ENCODE measurements at regions of chr16 and their contacts with region 1.

Region 1: DNA sequence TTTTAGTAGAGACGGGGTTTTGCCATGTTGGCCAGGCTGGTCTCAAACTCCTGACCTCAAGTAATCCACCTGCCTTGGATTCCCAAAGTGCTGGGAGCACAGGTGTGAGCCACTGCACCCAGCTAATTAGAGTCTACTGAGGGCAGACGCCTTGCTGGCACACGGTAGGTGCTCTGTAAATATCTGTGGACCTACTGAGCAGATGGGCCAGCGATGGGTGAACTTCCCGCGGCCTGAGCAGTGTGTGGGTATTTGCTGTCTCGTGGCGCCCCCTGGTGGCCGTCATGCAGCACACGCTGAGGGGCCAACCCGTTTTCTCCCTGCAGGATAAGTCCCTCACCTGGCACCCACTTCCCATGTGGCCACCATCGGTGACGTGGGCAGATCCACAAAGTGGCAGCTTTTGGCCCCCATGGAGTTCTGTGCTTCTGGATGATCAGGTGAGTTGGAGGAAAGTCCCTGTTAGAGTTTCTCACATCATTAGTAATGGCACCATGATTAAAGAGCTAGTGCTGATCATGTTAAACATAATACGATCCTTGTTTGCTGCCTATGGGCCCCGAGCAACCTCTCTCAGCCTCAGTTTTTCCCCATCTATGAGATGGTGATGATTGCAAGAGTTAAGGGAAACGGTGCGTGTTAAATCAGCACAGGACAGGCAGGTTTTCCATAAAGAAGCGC is 40.7 kb downstream of the ZDHHC7 start:
- DNase-seq: no peak
- H3K4me3 ChIP-seq: no peak overlapping the region
- H3K27me3 ChIP-seq: no peaks in the 10 kb centered on the region
- CTCF ChIP-seq: peak; percentile 87

Region 2: GRCh38 chr16:84754353-84754856 is 216.2 kb before region 1 on chr16:
- CTCF ChIA-PET with region 1: interaction called, 112 read pairs
- POLR2A ChIA-PET with region 1: interaction called, 7 read pairs
- DNase-seq: peak; percentile 41
- H3K4me3 ChIP-seq: no peak overlapping the region
- H3K27me3 ChIP-seq: no peaks in the 10 kb centered on the region
- CTCF ChIP-seq: peak; percentile 72

Region 3: DNA sequence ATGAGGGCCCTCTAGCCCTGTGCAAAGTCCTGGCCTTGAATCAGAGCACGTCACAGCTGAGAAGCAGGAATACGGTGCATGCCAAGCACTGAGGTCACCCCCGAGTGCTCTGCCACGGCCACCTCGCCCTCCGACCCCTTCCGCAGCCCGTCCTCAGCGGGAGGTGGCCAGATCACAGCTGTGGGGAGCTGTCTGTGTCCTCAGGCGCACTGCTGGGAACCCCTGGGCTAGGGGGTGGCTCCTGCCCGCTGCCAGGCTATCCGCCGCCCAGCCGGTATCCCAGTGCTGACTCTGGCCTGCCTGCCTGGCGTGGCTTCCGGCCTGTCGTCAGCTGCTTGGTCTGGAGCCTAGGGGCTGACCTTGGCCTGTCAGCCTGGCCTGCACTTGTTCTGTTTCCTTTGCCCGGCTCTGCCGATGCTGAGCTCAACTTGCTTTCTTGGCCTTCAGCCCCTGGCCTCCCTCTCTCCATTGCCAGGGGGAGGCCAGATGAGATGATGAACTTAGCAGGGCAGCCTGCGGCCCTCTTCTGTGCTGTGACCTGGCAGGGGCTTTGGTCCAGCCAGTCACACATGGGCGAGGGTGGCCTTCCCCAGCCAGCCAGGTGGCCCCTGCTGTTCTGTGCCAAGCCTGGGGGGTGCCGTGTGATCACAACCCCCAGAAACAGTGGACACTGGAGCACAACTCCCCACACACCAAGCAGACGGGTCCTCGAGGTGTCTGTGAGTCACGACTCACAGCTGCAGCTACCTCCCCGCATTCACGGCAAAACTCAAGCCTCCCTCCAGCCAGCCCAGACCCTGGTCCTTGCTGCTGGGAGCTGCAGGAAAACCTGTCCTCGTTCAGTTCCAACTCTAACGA is 36.6 kb before region 1 on chr16:
- CTCF ChIA-PET with region 1: interaction called, 82 read pairs
- POLR2A ChIA-PET with region 1: no interaction called
- DNase-seq: no peak
- H3K4me3 ChIP-seq: no peak overlapping the region
- H3K27me3 ChIP-seq: no peaks in the 10 kb centered on the region
- CTCF ChIP-seq: no peak

Region 4: DNA sequence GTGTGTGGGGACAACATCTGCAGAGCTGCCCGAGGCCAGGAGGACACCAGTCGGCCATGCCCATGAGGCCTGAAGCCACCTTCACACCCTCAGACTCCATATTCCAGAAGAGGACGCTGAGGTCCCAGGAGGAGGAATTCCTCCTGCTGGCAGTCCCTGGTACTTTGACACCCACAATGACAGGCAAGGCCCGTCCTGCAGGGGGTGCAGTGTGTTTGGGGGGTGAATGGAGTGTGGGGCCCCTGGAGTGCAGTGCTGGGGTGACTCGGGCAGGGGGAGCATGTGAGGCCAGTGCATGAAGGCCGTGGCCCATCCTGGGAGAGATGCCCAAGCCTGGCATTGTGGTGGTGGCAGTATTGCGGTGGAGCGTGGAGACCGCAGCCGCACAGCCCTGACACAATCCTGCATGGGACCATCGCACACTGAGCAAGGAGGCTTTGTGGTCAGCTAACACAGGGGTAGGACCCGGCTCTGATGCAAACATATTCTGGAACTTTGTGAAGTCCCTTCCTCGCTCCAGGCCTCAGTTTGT is 11.5 kb before region 1 on chr16:
- CTCF ChIA-PET with region 1: interaction called, 17 read pairs
- POLR2A ChIA-PET with region 1: no interaction called
- DNase-seq: no peak
- H3K4me3 ChIP-seq: no peak overlapping the region
- H3K27me3 ChIP-seq: peaks cover 5% of the 10 kb centered on the region; the same call in 1 of the 2 replicates
- CTCF ChIP-seq: peak; percentile 30; the same call in 1 of the 2 replicates

Region 5: GRCh38 chr16:84993926-84994325 is 23.3 kb after region 1 on chr16:
- CTCF ChIA-PET with region 1: interaction called, 10 read pairs
- POLR2A ChIA-PET with region 1: no interaction called
- DNase-seq: no peak
- H3K4me3 ChIP-seq: no peak overlapping the region
- H3K27me3 ChIP-seq: no peaks in the 10 kb centered on the region
- CTCF ChIP-seq: no peak

Measured in BJ (cell line).